Activated naive CD4-positive, alpha-beta T cell treated with anti-CD3 and anti-CD28 coated beads for 36 hours (primary cell): ENCODE measurements at regions of chr5 and their contacts with region 1.

Region 1: GRCh38 chr5:172806897-172807672 is 27.0 kb upstream of the ERGIC1 start:
- DNase-seq: peak; percentile 98
- H3K4me3 Mint-ChIP-seq: peak overlapping the region; percentile 43
- H3K27ac Mint-ChIP-seq: peak overlapping the region; percentile 86
- H3K4me1 Mint-ChIP-seq: peaks cover 14% of the 10 kb centered on the region
- H3K27me3 Mint-ChIP-seq: no peaks in the 10 kb centered on the region

Region 2: GRCh38 chr5:172777881-172778814 is 28.9 kb before region 1 on chr5:
- CTCF ChIA-PET with region 1: interaction called, 3 read pairs
- intact Hi-C with region 1: loop called (anchors 1 kb)
- DNase-seq: no peak
- H3K4me3 Mint-ChIP-seq: no peak overlapping the region
- H3K27ac Mint-ChIP-seq: peak overlapping the region; percentile 77
- H3K4me1 Mint-ChIP-seq: peaks cover 55% of the 10 kb centered on the region
- H3K27me3 Mint-ChIP-seq: no peaks in the 10 kb centered on the region